Activated T-helper 1 cell treated with anti-CD3 and anti-CD28 coated beads, Interleukin-12 subunit alpha, Interleukin-12 subunit beta, Interleukin-2, Interleukin-4 antibody, amounts not matched to agents 30 ng/mL and 10 ng/mL and 1 ng/mL, durations not matched to agents 14 hours and 24 hours and 36 hours (primary cell): ENCODE measurements at regions of chr7 and their contacts with region 1.

Region 1: DNA sequence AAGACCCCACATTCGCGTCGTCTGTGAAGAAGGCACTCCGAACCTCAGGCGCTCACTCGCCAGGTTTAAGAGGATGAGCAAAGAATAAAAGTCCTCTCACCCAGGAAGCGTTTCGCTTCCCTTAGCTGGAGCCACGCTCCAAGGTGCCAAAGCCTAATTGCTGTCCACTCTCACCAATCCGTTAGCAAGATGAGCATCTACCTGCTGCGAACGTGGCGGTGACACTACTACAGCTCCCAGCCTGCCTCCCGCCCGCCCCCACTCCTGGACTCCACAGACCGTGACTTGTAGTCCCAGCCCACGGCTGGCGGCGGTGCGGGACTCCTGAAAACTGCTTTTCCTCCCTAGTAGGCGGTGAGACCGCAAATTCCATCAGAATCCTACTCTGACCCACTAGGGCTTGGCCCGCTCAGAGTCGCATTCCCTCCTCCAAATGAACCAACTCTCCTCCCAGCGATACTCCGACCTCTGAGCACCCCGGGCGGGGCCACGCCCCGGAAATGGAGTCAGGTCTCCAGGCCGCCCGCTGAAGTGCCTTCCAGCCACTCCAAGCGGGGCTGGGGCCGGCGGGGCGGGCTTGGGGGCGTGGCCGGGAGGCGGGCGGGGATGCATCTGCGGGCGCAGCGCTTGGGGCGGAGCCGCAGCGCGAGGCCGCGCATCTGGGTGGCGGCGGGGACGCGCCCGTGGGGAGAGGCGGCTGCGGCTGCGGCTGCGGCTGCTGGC is 521 bp upstream of the PTPN12 start:
- DNase-seq: peak; percentile 93
- H3K4me3 Mint-ChIP-seq: peak overlapping the region; percentile 93
- H3K27ac Mint-ChIP-seq: peak overlapping the region; percentile 90
- H3K4me1 Mint-ChIP-seq: peaks cover 9% of the 10 kb centered on the region
- H3K27me3 Mint-ChIP-seq: peaks cover 16% of the 10 kb centered on the region

Region 2: DNA sequence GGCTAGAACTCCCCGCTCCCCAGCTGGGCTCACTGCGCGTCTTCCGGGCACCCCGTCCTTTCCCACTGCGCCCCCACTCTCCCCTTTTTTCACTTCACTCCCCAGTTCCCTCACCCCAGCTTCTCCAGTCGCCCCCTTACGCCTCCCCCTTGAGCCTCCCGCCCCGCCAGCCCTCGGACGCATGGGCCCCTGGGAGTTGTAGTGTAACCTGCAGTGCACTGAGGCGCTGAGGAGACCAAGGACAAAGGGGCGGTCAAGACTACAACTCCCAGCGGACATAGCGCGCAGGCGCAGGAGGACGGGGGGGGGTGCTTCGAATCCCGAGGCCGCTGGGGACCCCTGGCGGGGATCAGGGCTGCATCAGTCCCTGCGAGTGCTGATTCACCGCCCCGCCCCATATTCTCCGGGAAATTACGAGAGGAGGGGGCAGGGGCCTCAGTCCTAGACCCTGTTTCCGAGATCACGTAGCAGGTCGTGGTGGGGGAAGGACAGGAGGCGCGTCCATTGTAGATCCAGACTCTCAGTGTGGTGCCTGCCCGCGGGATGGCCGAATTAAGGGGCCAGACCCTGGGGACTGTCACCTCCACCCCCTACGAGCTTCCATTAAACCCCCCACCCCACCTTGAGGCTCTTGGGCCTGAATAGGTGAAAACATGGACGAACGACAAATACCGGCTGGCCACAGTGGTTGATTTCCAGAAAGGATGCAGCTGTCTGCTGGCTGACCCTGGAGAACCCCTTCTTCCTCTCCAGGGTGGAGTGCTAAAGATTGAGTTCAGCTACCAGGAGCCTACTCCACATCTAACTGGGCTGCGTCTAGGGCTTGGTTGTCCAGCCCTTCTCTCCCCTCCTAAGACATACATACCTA is 1177.2 kb before region 1 on chr7:
- intact Hi-C with region 1: loop called (anchors 2 kb)
- DNase-seq: peak; percentile 92
- H3K4me3 Mint-ChIP-seq: peak overlapping the region; percentile 88
- H3K27ac Mint-ChIP-seq: peak overlapping the region; percentile 96
- H3K4me1 Mint-ChIP-seq: peaks cover 48% of the 10 kb centered on the region
- H3K27me3 Mint-ChIP-seq: no peaks in the 10 kb centered on the region

Region 3: DNA sequence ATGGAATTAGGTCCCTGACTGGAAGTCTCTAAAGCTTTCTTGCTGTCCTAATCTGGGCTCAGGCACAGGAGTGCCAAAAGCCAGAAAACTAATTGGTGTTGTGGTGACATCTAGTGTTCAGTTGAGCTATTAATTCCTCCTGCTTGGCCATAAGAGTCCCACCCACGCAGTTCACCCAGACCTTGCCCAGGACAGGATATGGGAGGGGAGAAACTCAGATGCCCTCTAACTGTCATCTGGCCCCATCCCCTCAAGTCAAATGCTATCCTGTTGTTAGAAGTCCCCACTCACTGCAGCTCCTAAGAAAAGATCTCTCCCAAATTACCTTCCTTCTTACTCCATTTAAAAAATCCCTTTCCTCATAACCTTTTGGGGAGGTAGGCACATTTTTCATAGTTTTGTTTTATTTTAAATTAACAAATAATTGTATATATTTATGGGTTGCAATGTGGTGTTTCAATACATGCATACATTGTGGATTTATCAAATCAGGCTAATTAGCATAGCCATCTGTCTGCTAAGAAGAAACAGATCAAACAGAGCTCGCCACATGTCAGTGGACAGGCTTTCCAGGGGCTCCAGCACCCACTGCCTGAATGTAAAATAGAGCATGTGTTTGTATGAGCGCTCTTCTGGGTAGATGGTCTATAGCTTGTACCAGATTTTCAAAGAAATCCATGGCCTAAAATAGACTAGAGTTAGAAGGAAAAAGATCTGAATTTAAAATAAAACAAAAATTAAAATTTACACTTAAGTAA is 204.5 kb before region 1 on chr7:
- intact Hi-C with region 1: loop called (anchors 5 kb)
- DNase-seq: peak; percentile 44
- H3K4me3 Mint-ChIP-seq: no peak overlapping the region
- H3K27ac Mint-ChIP-seq: no peak overlapping the region
- H3K4me1 Mint-ChIP-seq: peaks cover 48% of the 10 kb centered on the region
- H3K27me3 Mint-ChIP-seq: no peaks in the 10 kb centered on the region

Region 4: DNA sequence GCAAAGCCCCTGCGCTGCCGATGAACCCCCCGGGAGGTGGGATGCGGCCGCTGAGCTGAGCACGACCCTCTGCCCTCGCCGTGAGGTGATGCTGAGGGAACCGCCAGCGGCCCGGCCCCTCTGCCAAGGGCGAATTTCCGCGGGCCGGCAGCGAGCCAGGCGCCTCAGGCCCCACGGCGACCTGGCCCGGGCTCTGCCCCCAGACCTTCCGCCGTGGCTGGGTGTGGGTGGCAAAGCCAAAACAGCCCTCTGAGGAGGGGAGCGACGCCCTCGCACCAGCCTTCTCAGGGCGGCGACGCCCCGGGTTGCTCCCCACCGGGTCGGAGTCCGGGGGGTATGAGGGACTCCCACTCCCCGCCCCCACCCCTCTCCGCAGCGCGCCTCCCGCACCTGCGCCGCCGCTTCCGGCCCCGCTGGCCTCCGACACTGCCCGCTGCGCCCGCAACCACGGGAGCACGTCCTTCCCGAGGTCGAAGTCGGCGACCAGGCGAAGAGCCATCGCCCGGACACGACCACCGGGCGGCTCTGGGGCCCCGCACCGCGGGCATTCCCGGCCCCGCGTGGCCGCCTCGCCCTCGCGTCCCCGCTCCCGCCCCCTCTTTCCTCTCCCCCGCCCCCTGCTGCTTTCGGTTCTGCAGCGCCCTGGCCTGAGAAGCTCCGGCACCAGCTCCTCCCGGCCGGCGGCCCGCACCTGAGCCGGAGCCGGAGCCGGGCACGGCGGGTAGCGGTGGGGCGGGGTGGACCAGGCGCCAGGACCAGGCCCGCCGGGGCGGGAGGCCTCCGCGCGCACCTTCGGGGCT is 120.6 kb before region 1 on chr7 and contains the start of gene GSAP:
- intact Hi-C with region 1: loop called (anchors 5 kb)
- DNase-seq: peak; percentile 38
- H3K4me3 Mint-ChIP-seq: peak within 1 kb of the TSS; percentile 50
- H3K27ac Mint-ChIP-seq: peak within 1 kb of the TSS; percentile 58
- H3K4me1 Mint-ChIP-seq: peaks cover 20% of the 10 kb centered on the region
- H3K27me3 Mint-ChIP-seq: peaks cover 30% of the 10 kb centered on the region
- total RNA-seq, gene GSAP: 1.3 and 1.6 TPM in 2 replicates

Region 5: DNA sequence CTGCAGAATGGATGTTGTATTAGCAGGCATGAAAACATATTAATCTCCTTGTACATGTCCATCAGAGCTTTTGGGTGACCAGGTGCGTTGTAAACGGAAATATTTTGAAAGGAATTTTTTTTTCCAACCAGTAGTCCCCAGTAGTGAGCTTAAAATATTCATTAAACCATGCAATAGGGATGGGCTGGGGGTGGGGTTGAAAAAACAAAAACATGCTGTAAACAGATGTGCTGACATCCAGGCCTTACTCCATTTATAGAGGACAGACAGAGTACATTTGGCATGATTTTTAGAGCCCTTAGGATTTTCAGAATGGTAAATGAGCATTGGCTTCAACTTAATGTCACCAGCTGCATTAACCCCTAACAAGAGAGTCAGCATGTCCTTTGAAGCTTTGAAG is 50.7 kb after region 1 on chr7:
- intact Hi-C with region 1: no loop called
- DNase-seq: no peak
- H3K4me3 Mint-ChIP-seq: no peak overlapping the region
- H3K27ac Mint-ChIP-seq: no peak overlapping the region
- H3K4me1 Mint-ChIP-seq: no peaks in the 10 kb centered on the region
- H3K27me3 Mint-ChIP-seq: no peaks in the 10 kb centered on the region

Region 6: DNA sequence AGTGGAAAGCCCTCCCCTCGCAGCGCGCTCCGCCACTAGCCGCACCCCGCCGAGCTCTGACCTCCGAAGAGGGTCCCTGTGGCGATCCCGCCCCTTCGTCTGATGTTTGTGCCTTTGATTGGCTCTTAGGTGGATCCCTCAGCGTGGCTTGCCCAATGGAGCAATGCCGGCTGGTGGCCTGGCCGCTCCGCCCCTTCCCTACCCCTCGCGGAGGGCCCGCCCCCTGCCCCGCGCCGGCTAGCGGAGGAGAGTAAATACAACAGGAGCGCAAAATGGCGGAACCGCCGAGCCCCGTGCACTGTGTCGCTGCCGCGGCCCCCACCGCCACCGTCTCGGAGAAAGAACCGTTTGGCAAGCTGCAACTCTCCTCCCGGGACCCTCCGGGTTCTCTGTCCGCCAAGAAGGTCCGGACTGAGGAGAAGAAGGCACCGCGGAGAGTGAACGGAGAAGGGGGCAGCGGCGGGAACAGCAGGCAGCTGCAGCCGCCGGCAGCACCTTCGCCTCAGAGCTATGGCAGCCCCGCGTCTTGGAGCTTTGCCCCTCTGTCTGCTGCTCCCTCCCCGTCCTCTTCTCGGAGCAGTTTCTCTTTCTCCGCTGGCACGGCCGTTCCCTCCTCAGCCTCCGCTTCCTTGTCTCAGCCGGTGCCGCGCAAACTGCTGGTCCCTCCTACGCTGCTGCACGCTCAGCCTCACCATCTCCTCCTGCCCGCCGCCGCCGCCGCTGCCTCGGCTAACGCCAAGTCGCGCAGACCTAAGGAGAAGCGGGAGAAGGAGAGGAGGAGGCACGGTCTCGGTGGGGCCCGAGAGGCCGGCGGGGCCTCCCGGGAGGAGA is 159.8 kb after region 1 on chr7 and contains the start of gene RSBN1L:
- intact Hi-C with region 1: loop called (anchors 1 kb)
- DNase-seq: peak; percentile 98
- H3K4me3 Mint-ChIP-seq: peak within 1 kb of the TSS; percentile 99
- H3K27ac Mint-ChIP-seq: peak within 1 kb of the TSS; percentile 94
- H3K4me1 Mint-ChIP-seq: peaks cover 55% of the 10 kb centered on the region
- H3K27me3 Mint-ChIP-seq: no peaks in the 10 kb centered on the region
- total RNA-seq, gene RSBN1L: 27.9 and 30.6 TPM in 2 replicates

Region 7: GRCh38 chr7:77798394-77799077 is 262.0 kb after region 1 on chr7 and contains the starts of genes PHTF2 and TMEM60:
- intact Hi-C with region 1: loop called (anchors 1 kb)
- DNase-seq: peak; percentile 90
- H3K4me3 Mint-ChIP-seq: peak within 1 kb of the TSS; percentile 95
- H3K27ac Mint-ChIP-seq: peak within 1 kb of the TSS; percentile 92
- H3K4me1 Mint-ChIP-seq: peaks cover 59% of the 10 kb centered on the region
- H3K27me3 Mint-ChIP-seq: no peaks in the 10 kb centered on the region
- total RNA-seq, gene PHTF2: 30.9 and 31.2 TPM in 2 replicates
- total RNA-seq, gene TMEM60: 9.0 and 11.0 TPM in 2 replicates

Region 8: GRCh38 chr7:78499283-78499682 is 962.7 kb after region 1 on chr7:
- intact Hi-C with region 1: no loop called
- DNase-seq: no peak
- H3K4me3 Mint-ChIP-seq: no peak overlapping the region
- H3K27ac Mint-ChIP-seq: no peak overlapping the region
- H3K4me1 Mint-ChIP-seq: no peaks in the 10 kb centered on the region
- H3K27me3 Mint-ChIP-seq: no peaks in the 10 kb centered on the region